Activated CD4-positive, alpha-beta T cell treated with anti-CD3 and anti-CD28 coated beads for 36 hours (primary cell): ENCODE measurements at regions of chr7 and their contacts with region 1.

Region 1: DNA sequence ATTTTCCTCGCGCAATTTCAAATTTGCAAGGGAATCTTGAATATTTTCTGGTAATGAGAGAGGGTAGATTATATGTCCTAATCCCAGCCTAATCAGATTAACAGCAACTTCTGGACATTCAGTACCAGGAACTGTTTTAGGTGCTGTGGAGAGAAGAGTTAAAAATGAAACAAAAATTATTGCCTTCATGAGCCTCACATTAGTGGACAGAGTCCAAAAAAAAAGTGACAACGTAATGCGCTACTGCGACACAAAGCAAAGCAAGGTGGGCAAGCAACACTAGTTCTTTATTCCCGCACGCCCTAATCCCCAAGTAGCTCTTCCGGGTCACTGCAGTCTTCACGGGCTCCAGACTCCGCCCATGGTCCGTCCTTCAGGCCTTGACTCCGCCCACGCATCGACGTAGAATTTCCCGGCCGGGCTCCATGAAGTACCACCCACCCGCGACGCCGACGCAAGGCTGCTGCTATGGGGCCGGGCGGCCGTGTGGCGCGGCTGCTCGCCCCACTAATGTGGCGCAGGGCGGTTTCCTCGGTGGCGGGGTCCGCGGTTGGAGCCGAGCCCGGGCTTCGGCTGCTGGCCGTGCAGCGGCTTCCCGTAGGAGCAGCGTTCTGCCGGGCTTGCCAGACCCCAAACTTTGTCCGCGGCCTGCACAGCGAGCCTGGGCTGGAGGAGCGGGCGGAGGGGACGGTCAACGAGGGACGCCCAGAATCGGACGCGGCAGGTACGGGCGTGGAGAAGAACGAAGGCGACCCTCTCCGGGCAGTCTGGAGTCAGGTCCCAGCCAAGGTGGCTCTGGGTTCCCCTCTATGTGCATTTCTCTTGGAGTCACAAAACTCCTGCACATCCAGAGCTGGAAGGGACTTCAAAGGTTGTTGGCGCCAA is at the start of gene MALSU1:
- DNase-seq: peak; percentile 99
- ATAC-seq: peak; percentile 97
- H3K4me3 Mint-ChIP-seq: peak within 1 kb of the TSS; percentile 98
- H3K27ac Mint-ChIP-seq: peak within 1 kb of the TSS; percentile 97
- H3K4me1 Mint-ChIP-seq: peaks cover 38% of the 10 kb centered on the region
- H3K27me3 Mint-ChIP-seq: no peaks in the 10 kb centered on the region
- total RNA-seq, gene MALSU1: 97.7 to 98.4 TPM

Region 2: DNA sequence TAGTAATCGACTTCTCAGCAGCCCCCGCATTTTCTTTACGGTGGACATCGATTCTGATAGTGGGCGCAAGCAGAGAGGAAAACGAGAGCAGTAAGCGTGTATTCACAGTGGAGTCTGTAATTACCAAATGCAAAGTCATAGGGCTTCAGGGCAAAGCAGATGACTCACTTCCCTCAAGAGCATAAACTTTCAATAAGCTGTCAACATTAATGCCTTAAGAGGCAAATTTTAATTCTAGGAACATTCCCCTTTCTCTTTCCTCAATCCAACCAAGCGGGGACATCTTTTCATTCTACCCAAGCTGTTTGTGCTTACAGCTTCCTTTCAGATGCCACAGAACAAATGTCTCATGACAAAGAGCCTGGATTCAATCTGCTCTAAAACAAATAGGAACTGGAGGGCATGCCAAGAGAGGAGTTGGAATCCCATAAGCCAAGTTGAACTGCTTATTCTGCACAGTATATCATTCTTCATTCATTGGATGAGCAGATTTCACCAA is 48.6 kb after region 1 on chr7:
- CTCF ChIA-PET with region 1: interaction called, 3 read pairs
- POLR2A ChIA-PET with region 1: no interaction called
- intact Hi-C with region 1: loop called in 1 of 2 experiments (anchors 1 kb)
- DNase-seq: peak; percentile 20
- ATAC-seq: peak; percentile 76
- H3K4me3 Mint-ChIP-seq: no peak overlapping the region
- H3K27ac Mint-ChIP-seq: peak overlapping the region; percentile 15
- H3K4me1 Mint-ChIP-seq: peaks cover 33% of the 10 kb centered on the region
- H3K27me3 Mint-ChIP-seq: peaks cover 4% of the 10 kb centered on the region